Naive thymus-derived CD4-positive, alpha-beta T cell (primary cell): ENCODE measurements at regions of chr3 and their contacts with region 1.

Region 1: DNA sequence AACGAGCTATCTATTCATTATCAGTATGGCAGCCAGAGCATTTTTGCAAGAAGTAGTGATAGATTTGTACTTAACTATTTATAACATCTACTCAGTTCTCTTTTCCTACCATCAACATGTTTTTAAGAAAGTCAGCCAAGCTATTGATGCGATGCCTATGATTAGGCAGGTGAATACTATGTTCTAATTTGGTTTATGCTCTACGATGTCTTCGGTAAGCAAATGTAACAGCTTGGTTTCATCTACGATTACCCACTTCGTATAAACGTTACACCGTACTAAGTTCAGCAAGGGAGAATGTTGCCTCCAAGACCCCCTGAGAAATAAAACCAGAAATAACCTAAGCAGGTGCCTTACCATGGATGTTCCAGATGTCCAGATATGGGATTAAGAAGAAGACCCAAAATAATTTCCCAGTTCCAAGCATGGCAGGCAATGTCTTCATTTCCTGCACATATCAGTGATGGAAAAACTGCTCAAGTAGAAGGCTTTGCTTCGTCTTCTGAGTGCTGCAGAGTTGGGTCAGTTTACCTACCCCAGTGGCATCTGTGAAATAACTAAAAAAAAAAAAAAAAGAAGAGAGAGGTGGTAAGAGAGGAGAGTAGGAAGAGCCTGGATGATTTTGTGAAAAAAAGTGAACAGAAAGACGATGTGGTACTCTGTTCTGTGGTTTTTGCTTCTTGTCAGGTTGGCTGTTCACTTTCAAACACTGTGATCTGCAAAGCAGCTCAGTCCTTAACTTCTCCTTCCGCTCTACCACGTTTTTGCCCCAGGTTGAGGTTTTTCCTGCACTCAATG is at the start of gene BTLA:
- DNase-seq: peak in 7 of 9 donors; percentile 45 to 65 (median 50)
- ATAC-seq: peak; percentile 81
- H3K4me3 ChIP-seq: peak within 1 kb of the TSS; percentile 80
- H3K4me3 Mint-ChIP-seq: peak within 1 kb of the TSS; percentile 85 to 100 (median 97)
- H3K27ac ChIP-seq: peak within 1 kb of the TSS; percentile 68
- H3K27ac Mint-ChIP-seq: peak within 1 kb of the TSS; percentile 88 to 99 (median 94)
- H3K4me1 ChIP-seq: peaks cover 14 to 26% of the 10 kb centered on the region in 2 donors
- H3K4me1 Mint-ChIP-seq: peaks cover 34 to 63% (median 55%) of the 10 kb centered on the region in 7 donors
- H3K27me3 ChIP-seq: no peaks in the 10 kb centered on the region
- H3K27me3 Mint-ChIP-seq: no peaks in the 10 kb centered on the region
- total RNA-seq, gene BTLA: 15.6 to 29.5 (median 26.1) TPM

Region 2: DNA sequence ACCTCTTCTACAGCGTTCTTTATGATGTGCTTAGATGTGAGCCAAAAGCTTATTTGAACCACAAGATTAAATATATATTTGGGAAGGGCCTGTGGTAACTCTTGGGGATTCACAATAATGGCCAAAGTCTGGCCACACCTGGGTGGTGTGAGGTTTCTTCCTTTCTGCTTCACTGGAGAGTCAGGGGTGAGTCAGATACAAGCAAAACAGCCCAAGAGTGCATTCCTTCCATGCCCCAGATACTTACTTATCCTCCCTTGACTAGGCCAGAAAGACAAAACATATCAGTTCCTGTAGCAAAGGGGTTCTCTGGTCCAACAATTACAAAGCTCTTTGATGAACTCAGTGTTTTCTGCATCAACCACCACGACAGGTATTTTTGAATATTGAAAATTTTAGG is 904.9 kb before region 1 on chr3:
- CTCF ChIA-PET with region 1: no interaction called
- POLR2A ChIA-PET with region 1: no interaction called
- intact Hi-C with region 1: loop called in 1 of 2 experiments (anchors 10 kb)
- DNase-seq: no peak
- ATAC-seq: no peak
- H3K4me3 ChIP-seq: no peak overlapping the region
- H3K4me3 Mint-ChIP-seq: peak overlapping the region in 1 of 10 donors; percentile 83
- H3K27ac ChIP-seq: no peak overlapping the region
- H3K27ac Mint-ChIP-seq: peak overlapping the region in 8 of 9 donors; percentile 3 to 91 (median 20)
- H3K4me1 ChIP-seq: peaks cover 0 to 21% of the 10 kb centered on the region in 2 donors
- H3K4me1 Mint-ChIP-seq: peaks cover 11 to 84% (median 24%) of the 10 kb centered on the region in 7 donors
- H3K27me3 ChIP-seq: no peaks in the 10 kb centered on the region
- H3K27me3 Mint-ChIP-seq: no peaks in the 10 kb centered on the region

Region 3: DNA sequence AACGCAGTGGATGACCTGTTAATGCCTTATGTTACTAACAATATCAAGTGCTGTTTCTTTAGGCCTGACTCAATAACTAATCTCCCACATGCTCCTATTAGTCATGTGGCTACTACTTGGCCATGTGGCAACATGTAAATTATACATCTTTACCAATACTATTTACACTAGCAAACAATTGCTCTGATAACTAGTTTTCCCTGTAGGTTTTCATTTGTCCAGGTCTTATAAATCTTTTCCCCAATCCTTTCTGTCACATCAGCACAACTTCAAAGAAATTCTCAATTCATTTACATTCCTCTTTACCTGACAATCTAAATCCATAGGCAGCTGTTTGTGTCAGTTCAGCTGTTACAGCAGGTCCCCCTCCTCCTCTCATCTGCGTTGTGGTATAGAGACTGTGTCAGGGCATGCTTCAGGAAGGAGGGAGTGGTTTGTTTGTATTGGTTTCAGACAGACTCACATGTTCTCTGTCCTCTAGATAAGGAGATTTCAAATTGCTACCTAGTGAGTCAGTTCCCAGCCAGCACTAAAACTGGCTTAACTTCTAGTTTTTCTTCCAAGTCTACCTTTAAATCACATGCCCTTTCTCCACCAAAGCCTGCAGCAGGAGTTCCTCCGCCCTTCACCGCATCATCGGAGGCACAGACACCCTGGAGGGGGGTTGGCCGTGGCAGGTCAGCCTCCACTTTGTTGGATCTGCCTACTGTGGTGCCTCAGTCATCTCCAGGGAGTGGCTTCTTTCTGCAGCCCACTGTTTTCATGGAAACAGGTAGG is 424.2 kb before region 1 on chr3:
- CTCF ChIA-PET with region 1: no interaction called
- POLR2A ChIA-PET with region 1: no interaction called
- intact Hi-C with region 1: loop called in 1 of 2 experiments (anchors 5 kb)
- DNase-seq: peak in 8 of 9 donors; percentile 29 to 60 (median 52)
- ATAC-seq: peak; percentile 88
- H3K4me3 ChIP-seq: no peak overlapping the region
- H3K4me3 Mint-ChIP-seq: peak overlapping the region; percentile 32 to 76 (median 56)
- H3K27ac ChIP-seq: peak overlapping the region; percentile 32
- H3K27ac Mint-ChIP-seq: peak overlapping the region; percentile 72 to 95 (median 85)
- H3K4me1 ChIP-seq: peaks cover 4 to 17% of the 10 kb centered on the region in 2 donors
- H3K4me1 Mint-ChIP-seq: peaks cover 17 to 57% (median 51%) of the 10 kb centered on the region in 7 donors
- H3K27me3 ChIP-seq: no peaks in the 10 kb centered on the region
- H3K27me3 Mint-ChIP-seq: peaks cover 0 to 3% (median 0%) of the 10 kb centered on the region in 5 donors

Region 4: DNA sequence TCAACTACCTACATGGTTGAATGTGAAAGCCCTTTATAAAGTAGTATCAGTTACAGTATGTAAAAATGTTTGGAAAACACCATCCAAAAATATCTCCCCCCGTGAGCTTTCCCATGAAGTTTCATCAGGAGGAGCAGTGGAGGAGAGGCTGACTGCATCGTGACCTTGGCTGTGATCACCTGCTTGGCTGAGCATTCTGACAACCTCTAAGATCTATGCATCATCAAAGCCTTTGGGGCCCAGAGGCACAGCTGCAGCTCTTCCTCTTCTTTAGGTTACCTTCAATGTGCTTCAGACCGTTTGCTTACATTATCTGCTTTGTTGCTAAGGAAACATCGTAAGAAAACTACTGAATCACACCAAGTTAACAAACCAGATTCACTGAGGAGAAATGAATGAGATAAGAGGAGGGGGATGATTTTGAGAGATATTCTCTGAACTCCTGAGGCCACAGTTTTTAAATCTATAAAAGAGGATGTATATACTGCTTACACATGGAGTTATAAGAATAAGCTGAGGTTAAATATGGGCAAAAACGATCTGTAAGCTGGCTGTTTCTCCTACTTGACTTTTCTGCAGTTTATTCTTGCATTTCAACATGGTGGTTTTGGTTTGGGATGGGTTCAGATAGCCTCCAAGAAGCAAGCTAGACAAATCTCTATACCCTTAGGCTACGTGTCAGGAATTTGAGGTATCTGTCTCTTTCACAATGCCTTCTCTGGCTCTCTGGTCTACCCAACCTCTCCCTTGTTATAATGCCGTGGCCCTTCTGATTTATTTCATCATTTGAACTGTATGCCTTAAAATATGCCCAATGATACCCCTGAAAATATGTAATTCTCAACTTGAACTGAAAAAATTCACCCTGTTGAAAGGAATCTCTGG is 370.0 kb before region 1 on chr3:
- CTCF ChIA-PET with region 1: interaction called, 3 read pairs
- POLR2A ChIA-PET with region 1: interaction called, 5 read pairs
- intact Hi-C with region 1: loop called in 1 of 2 experiments (anchors 5 kb)
- DNase-seq: peak in 8 of 9 donors; percentile 39 to 88 (median 83)
- ATAC-seq: peak; percentile 82
- H3K4me3 ChIP-seq: no peak overlapping the region
- H3K4me3 Mint-ChIP-seq: peak overlapping the region; percentile 23 to 100 (median 64)
- H3K27ac ChIP-seq: peak overlapping the region; percentile 82
- H3K27ac Mint-ChIP-seq: peak overlapping the region; percentile 87 to 95 (median 93)
- H3K4me1 ChIP-seq: peaks cover 41 to 72% of the 10 kb centered on the region in 2 donors
- H3K4me1 Mint-ChIP-seq: peaks cover 49 to 92% (median 90%) of the 10 kb centered on the region in 7 donors
- H3K27me3 ChIP-seq: no peaks in the 10 kb centered on the region
- H3K27me3 Mint-ChIP-seq: no peaks in the 10 kb centered on the region

Region 5: DNA sequence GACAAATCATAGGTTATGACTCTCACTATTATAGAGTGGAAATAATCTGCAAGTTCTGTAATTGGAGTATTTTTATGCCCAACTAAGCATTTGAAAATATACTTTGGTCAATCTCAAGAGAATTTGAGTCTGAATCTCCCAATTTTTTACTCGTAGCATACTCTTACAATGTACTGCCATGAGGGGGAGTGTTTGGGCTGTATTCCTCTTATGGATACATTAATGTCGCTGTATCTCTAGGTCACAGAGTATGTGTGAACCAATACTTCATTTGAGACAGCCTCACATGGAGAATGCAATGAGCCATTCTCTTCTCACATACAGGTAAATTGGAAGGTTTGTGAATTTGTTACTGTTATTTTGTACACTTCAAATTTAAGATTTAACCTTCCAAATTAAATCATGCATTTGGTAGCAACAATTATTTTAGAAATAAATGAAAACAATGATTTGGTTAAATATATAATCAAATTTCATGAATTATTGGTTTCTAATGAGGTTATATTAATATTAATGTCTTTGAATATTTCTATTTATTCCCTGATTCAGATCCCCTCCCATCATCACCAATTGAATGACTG is 171.7 kb before region 1 on chr3:
- CTCF ChIA-PET with region 1: interaction called, 3 read pairs
- POLR2A ChIA-PET with region 1: interaction called, 12 read pairs
- intact Hi-C with region 1: loop called in 1 of 2 experiments (anchors 1 kb)
- DNase-seq: peak in 7 of 9 donors; percentile 41 to 76 (median 66)
- ATAC-seq: peak; percentile 100
- H3K4me3 ChIP-seq: no peak overlapping the region
- H3K4me3 Mint-ChIP-seq: no peak overlapping the region
- H3K27ac ChIP-seq: no peak overlapping the region
- H3K27ac Mint-ChIP-seq: no peak overlapping the region
- H3K4me1 ChIP-seq: no peaks in the 10 kb centered on the region
- H3K4me1 Mint-ChIP-seq: peaks cover 0 to 8% (median 6%) of the 10 kb centered on the region in 7 donors
- H3K27me3 ChIP-seq: no peaks in the 10 kb centered on the region
- H3K27me3 Mint-ChIP-seq: peaks cover 0 to 20% (median 5%) of the 10 kb centered on the region in 5 donors

Region 6: GRCh38 chr3:112333002-112333380 is 166.1 kb before region 1 on chr3 and contains the start of gene CD200:
- CTCF ChIA-PET with region 1: interaction called, 4 read pairs
- POLR2A ChIA-PET with region 1: interaction called, 12 read pairs
- intact Hi-C with region 1: loop called in 1 of 2 experiments (anchors 1 kb)
- DNase-seq: peak; percentile 25 to 69 (median 42)
- ATAC-seq: peak; percentile 79
- H3K4me3 ChIP-seq: peak within 1 kb of the TSS; percentile 78
- H3K4me3 Mint-ChIP-seq: peak within 1 kb of the TSS; percentile 82 to 95 (median 92)
- H3K27ac ChIP-seq: peak within 1 kb of the TSS; percentile 62
- H3K27ac Mint-ChIP-seq: peak within 1 kb of the TSS; percentile 71 to 90 (median 78)
- H3K4me1 ChIP-seq: peaks cover 0 to 6% of the 10 kb centered on the region in 2 donors
- H3K4me1 Mint-ChIP-seq: peaks cover 14 to 56% (median 47%) of the 10 kb centered on the region in 7 donors
- H3K27me3 ChIP-seq: no peaks in the 10 kb centered on the region
- H3K27me3 Mint-ChIP-seq: no peaks in the 10 kb centered on the region
- total RNA-seq, gene CD200: 2.5 to 9.1 (median 2.9) TPM

Region 7: DNA sequence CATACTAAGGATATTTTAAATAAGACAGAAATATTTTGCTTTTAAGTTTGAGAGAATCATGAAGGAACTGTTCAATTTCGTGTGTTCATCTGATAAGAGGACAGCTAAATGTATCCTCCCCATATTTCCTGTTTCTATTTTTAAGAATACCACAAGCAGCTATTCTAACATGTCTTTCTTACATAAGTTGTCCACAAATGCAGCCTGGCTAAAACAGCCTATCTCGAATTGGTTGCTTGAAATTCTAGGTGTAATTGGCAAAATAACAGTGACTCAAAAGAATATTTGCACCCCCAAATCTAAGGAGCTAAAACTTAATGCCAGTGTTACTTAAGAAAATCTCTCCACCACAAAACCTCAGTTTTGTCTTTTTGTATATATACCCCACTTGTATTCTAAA is 34.8 kb before region 1 on chr3:
- CTCF ChIA-PET with region 1: interaction called, 3 read pairs
- POLR2A ChIA-PET with region 1: interaction called, 6 read pairs
- intact Hi-C with region 1: loop called (anchors 1 to 2 kb)
- DNase-seq: peak in 7 of 9 donors; percentile 28 to 56 (median 47)
- ATAC-seq: peak; percentile 83
- H3K4me3 ChIP-seq: peak overlapping the region; percentile 7
- H3K4me3 Mint-ChIP-seq: peak overlapping the region; percentile 39 to 84 (median 74)
- H3K27ac ChIP-seq: peak overlapping the region; percentile 43
- H3K27ac Mint-ChIP-seq: peak overlapping the region; percentile 55 to 96 (median 86)
- H3K4me1 ChIP-seq: peaks cover 54 to 63% of the 10 kb centered on the region in 2 donors
- H3K4me1 Mint-ChIP-seq: peaks cover 40 to 95% (median 88%) of the 10 kb centered on the region in 7 donors
- H3K27me3 ChIP-seq: no peaks in the 10 kb centered on the region
- H3K27me3 Mint-ChIP-seq: no peaks in the 10 kb centered on the region